Transverse colon (tissue), 4 donors: ENCODE measurements at regions of chr5 and their contacts with region 1.

Region 1: GRCh38 chr5:31809050-31809870 is 170.3 kb downstream of the PDZD2 start:
- DNase-seq: peak; percentile 26
- H3K4me3 ChIP-seq: no peak overlapping the region
- H3K27ac ChIP-seq: no peak overlapping the region
- H3K4me1 ChIP-seq: no peaks in the 10 kb centered on the region
- H3K27me3 ChIP-seq: no peaks in the 10 kb centered on the region
- CTCF ChIP-seq: peak; percentile 30 to 54 (median 43)
- EP300 ChIP-seq: no peak
- POLR2A ChIP-seq: no peak

Region 2: DNA sequence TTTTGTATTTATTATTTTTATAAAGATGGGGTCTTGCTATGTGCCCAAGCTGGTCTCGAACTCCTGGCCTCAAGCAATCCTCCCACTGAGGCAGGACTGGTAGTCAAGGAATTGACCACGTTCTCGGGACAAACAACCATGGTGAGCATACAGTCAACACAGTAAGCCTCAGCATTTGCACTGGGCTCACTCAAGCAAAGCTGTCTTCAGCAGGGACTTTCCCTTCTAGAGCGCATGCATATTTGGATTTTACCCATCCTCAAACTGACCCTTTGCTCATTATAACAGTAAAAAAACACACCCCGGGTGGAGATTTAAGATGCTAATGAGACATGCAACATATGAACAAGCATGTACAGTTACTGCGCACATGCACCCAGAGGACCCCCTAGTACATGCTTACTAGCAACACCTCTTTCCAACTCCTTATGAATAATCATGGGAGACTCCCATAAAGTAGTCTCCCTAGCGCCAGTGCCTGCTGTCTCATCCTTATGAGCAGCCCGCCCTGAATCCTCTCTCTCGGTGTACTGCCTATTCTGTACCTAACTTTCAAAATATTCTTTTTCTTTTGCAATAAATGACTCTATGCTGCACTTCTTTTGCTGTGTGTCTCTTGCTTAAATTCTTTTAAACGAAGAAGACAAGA is 235.6 kb before region 1 on chr5:
- in situ Hi-C with region 1: loop called in 3 of 4 experiments (anchors 10 to 25 kb)
- intact Hi-C with region 1: no loop called
- DNase-seq: no peak
- H3K4me3 ChIP-seq: no peak overlapping the region
- H3K27ac ChIP-seq: no peak overlapping the region
- H3K4me1 ChIP-seq: no peaks in the 10 kb centered on the region
- H3K27me3 ChIP-seq: no peaks in the 10 kb centered on the region
- CTCF ChIP-seq: no peak
- EP300 ChIP-seq: no peak
- POLR2A ChIP-seq: no peak

Region 3: GRCh38 chr5:31581498-31582099 is 227.7 kb before region 1 on chr5:
- in situ Hi-C with region 1: loop called (anchors 10 to 25 kb)
- intact Hi-C with region 1: loop called (anchors 5 kb)
- DNase-seq: no peak
- H3K4me3 ChIP-seq: no peak overlapping the region
- H3K27ac ChIP-seq: no peak overlapping the region
- H3K4me1 ChIP-seq: no peaks in the 10 kb centered on the region
- H3K27me3 ChIP-seq: peaks cover 9% of the 10 kb centered on the region
- CTCF ChIP-seq: peak; percentile 34 to 52 (median 42)
- EP300 ChIP-seq: no peak
- POLR2A ChIP-seq: no peak

Region 4: DNA sequence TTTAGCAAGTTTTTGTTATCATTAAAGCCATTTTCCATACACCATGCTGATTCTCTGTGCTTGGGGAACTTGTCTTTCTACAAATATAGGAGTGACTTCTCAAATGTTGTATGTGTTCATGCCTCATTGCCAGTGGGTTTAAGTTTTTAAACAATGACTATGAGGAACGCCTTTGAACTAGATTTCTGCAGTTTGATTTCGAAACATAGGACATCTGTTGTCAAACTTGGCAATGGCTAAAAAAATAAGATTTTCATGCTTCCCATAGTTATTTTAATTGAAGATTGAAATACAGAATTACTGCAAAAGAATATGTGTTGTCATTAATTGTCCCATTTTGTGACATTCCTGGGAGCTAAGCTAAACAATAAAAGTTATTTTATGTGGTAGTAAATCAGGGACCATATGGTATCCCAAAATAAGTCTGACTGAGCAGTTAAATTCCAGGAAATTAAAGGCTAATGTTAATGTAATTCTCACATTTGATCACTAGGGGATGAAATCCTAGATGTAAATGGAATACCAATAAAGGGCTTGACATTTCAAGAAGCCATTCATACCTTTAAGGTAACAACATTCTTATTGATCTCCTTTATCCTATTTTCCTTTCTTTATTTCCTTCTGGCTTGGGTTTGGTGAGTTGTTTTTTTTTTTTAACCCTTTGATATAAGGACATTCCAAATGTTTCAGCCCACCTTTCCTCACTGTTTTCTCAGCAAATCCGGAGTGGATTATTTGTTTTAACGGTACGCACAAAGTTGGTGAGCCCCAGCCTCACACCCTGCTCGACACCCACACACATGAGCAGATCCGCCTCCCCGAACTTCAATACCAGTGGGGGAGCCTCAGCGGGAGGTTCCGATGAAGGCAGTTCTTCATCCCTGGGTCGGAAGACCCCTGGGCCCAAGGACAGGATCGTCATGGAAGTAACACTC is 248.2 kb after region 1 on chr5:
- in situ Hi-C with region 1: loop called in 1 of 4 experiments (anchors 25 kb)
- intact Hi-C with region 1: no loop called
- DNase-seq: no peak
- H3K4me3 ChIP-seq: no peak overlapping the region
- H3K27ac ChIP-seq: no peak overlapping the region
- H3K4me1 ChIP-seq: no peaks in the 10 kb centered on the region
- H3K27me3 ChIP-seq: no peaks in the 10 kb centered on the region
- CTCF ChIP-seq: peak in 3 of 5 experiments; percentile 11 to 18 (median 16)
- EP300 ChIP-seq: no peak
- POLR2A ChIP-seq: no peak

Region 5: DNA sequence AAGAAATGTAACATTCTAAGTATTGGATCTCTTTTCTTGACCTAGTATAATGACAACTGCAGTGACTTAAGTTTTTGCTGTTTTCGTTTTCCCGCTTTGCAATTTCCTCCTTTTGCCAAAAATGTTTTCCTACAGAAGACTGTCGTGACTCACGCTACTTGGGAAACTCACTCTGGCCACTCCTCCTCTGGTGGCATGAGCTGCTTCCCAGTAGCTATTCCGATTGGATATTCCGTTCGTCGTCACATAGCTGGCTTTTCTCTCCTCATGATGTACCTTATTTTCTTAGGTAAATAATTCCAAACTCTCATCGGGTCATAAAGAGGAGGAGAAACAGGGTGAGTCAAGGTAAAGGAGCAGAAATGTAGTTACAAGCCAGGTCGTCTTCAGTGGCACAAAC is 300.0 kb after region 1 on chr5:
- in situ Hi-C with region 1: no loop called
- intact Hi-C with region 1: no loop called
- DNase-seq: no peak
- H3K4me3 ChIP-seq: no peak overlapping the region
- H3K27ac ChIP-seq: no peak overlapping the region
- H3K4me1 ChIP-seq: no peaks in the 10 kb centered on the region
- H3K27me3 ChIP-seq: no peaks in the 10 kb centered on the region
- CTCF ChIP-seq: no peak
- EP300 ChIP-seq: no peak
- POLR2A ChIP-seq: no peak

Region 6: GRCh38 chr5:32339198-32339597 is 529.9 kb after region 1 on chr5:
- in situ Hi-C with region 1: no loop called
- intact Hi-C with region 1: no loop called
- DNase-seq: no peak
- H3K4me3 ChIP-seq: no peak overlapping the region
- H3K27ac ChIP-seq: no peak overlapping the region
- H3K4me1 ChIP-seq: no peaks in the 10 kb centered on the region
- H3K27me3 ChIP-seq: no peaks in the 10 kb centered on the region
- CTCF ChIP-seq: no peak
- EP300 ChIP-seq: no peak
- POLR2A ChIP-seq: no peak